GM12878 (cell line): ENCODE measurements at regions of chr15 and their contacts with region 1.

Region 1: DNA sequence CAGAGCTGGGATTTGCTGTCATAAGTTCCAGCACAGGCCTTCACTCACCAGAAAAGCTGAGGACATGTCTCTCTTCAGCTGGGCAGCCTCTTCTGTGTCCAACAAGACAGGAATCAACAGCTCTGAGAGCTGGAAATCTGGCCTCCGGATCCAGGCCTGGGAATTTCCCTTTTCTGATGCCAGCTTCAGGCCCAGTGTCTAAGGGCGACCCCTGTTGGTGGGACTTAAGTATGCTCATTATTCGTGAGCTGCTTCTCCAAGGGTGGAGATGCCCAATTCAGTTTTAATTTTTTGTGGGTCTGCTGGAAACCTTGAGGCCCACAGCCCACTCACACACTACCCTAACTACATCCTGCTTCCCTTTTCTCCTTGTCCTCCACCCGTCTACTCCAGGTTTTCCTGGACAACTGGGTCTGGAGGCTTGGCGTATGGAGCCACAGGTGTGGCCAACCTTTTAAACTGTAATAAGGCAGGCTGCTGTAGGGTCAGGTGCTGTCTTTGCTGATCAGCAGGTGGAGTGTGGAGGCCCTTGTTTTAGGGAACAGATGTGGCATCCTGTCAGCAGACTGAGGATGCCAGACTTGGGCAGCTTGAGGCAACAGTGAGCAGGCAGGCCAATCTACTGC is 2.6 kb upstream of the CEMIP start:
- DNase-seq: no peak
- ATAC-seq: peak; percentile 72
- H3K4me3 ChIP-seq: no peak overlapping the region
- H3K27ac ChIP-seq: no peak overlapping the region
- H3K4me1 ChIP-seq: no peaks in the 10 kb centered on the region
- H3K27me3 ChIP-seq: peaks cover 18 to 19% of the 10 kb centered on the region in 2 experiments
- CTCF ChIP-seq: peak; percentile 86 to 94 (median 89)
- EP300 ChIP-seq: no peak
- POLR2A ChIP-seq: no peak
- RAD21 ChIP-seq: peak; percentile 93

Region 2: DNA sequence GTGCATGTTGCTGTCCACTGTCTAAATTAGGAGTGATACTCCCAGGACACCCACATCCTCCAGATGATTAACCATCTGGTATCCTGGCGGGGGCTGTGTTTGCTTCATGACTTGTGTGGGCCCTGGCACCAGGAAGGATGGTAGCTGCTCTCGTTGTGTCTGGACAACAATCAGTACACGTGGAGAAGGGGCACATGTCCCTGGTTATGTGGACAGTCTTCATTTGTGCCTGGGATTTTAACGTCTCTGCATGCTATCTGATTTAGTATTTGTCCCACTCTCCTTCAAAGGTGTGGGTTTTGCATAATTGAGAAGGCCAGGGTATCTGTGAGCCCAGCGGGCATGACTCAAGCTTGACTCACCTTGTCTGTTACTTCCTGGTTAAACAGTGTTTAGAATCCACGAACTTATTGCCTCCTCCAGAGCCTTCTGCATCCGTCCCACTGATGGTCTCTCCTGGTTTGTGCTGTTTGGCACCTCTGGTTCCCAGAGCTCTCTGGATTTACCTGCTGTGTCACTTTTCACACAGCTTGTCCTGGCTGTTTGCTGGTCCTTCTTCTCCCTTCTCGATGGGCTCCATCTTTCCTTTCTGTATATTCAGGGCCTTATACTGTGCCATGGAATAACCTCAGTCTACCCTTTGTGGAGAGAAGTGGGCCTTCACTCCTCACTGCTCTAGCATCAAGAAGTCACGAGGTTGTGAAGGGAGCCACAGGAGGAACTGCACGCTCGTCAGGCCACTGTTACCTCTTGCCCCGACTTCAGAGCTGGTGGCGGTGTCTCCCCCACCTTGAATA is 339.8 kb before region 1 on chr15:
- CTCF ChIA-PET with region 1: no interaction called
- POLR2A ChIA-PET with region 1: no interaction called
- RAD21 ChIA-PET with region 1: no interaction called
- SMC1A ChIA-PET with region 1: no interaction called
- in situ Hi-C with region 1: no loop called
- intact Hi-C with region 1: no loop called
- DNase-seq: no peak
- ATAC-seq: no peak
- H3K4me3 ChIP-seq: no peak overlapping the region
- H3K27ac ChIP-seq: no peak overlapping the region
- H3K4me1 ChIP-seq: no peaks in the 10 kb centered on the region
- H3K27me3 ChIP-seq: peaks cover 0 to 3% of the 10 kb centered on the region in 2 experiments; a peak in 2 of 4 replicates
- CTCF ChIP-seq: no peak
- EP300 ChIP-seq: no peak
- POLR2A ChIP-seq: no peak
- RAD21 ChIP-seq: no peak

Region 3: GRCh38 chr15:80567721-80568157 is 208.8 kb before region 1 on chr15:
- CTCF ChIA-PET with region 1: interaction called, 86 read pairs
- POLR2A ChIA-PET with region 1: no interaction called
- RAD21 ChIA-PET with region 1: interaction called, 59 read pairs
- SMC1A ChIA-PET with region 1: interaction called, 40 read pairs
- in situ Hi-C with region 1: loop called (anchors 10 kb)
- intact Hi-C with region 1: loop called (anchors 1 kb)
- DNase-seq: no peak
- ATAC-seq: peak; percentile 87
- H3K4me3 ChIP-seq: no peak overlapping the region
- H3K27ac ChIP-seq: no peak overlapping the region
- H3K4me1 ChIP-seq: no peaks in the 10 kb centered on the region
- H3K27me3 ChIP-seq: peaks cover 2 to 5% of the 10 kb centered on the region in 2 experiments; a peak in 3 of 4 replicates
- CTCF ChIP-seq: peak; percentile 56 to 69 (median 59); a peak in 4 of 6 replicates
- EP300 ChIP-seq: no peak
- POLR2A ChIP-seq: no peak
- RAD21 ChIP-seq: peak; percentile 71

Region 4: DNA sequence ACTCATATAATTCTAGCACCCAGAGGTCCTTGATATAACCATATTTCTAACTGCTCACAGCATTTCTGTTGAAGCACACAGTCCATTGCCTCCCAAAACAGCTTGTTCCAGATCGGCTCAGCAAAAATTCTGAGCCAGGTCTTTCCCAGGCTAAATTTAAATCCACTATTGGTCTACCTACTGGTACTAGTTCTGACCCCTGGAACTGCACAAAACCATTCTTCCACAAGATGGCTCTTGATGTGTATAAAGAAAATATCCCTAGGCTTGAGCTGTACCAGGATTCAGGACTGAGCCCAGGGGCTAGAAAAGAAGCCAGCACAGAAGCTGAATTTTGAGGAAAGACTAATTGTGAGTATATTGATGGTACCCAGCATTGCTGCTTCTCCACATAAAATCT is 156.9 kb before region 1 on chr15:
- CTCF ChIA-PET with region 1: interaction called, 37 read pairs
- POLR2A ChIA-PET with region 1: no interaction called
- RAD21 ChIA-PET with region 1: interaction called, 19 read pairs
- SMC1A ChIA-PET with region 1: interaction called, 16 read pairs
- in situ Hi-C with region 1: no loop called
- intact Hi-C with region 1: loop called (anchors 2 kb)
- DNase-seq: no peak
- ATAC-seq: 0 out of 3 replicates have a peak, but pooled peaks have one; percentile 38
- H3K4me3 ChIP-seq: no peak overlapping the region
- H3K27ac ChIP-seq: no peak overlapping the region
- H3K4me1 ChIP-seq: no peaks in the 10 kb centered on the region
- H3K27me3 ChIP-seq: peaks cover 1 to 3% of the 10 kb centered on the region in 2 experiments; a peak in 3 of 4 replicates
- CTCF ChIP-seq: peak in 1 of 3 experiments; percentile 34; a peak in 3 of 6 replicates
- EP300 ChIP-seq: no peak
- POLR2A ChIP-seq: no peak
- RAD21 ChIP-seq: peak; percentile 33; the same call in 1 of the 2 replicates

Region 5: DNA sequence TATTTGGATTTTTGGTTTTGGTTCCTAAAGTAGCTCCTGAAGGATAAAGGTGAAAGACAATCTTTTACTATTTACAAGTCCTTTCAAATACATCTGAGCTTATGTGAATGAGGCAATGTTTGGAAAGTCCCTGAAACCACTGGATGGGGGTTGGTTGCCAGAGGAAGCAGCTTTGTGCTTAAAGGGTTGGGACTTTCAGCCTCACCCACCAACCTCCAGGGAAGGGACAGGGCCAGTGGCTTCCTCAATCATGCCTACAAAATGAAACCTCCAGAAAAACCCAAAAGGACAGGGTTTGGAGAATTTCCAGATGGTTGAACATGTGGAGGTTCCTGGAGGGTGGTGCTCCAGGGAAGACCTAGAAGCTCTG is 102.3 kb before region 1 on chr15:
- CTCF ChIA-PET with region 1: interaction called, 13 read pairs
- POLR2A ChIA-PET with region 1: no interaction called
- RAD21 ChIA-PET with region 1: interaction called, 9 read pairs
- SMC1A ChIA-PET with region 1: interaction called, 7 read pairs
- in situ Hi-C with region 1: no loop called
- intact Hi-C with region 1: no loop called
- DNase-seq: peak; percentile 55
- ATAC-seq: peak; percentile 88
- H3K4me3 ChIP-seq: no peak overlapping the region
- H3K27ac ChIP-seq: peak overlapping the region; percentile 76
- H3K4me1 ChIP-seq: peaks cover 16% of the 10 kb centered on the region; the same call in 1 of the 2 replicates
- H3K27me3 ChIP-seq: no peaks in the 10 kb centered on the region
- CTCF ChIP-seq: no peak
- EP300 ChIP-seq: peak in 1 of 2 experiments; percentile 34; a peak in 1 of 4 replicates
- POLR2A ChIP-seq: no peak
- RAD21 ChIP-seq: no peak

Region 6: DNA sequence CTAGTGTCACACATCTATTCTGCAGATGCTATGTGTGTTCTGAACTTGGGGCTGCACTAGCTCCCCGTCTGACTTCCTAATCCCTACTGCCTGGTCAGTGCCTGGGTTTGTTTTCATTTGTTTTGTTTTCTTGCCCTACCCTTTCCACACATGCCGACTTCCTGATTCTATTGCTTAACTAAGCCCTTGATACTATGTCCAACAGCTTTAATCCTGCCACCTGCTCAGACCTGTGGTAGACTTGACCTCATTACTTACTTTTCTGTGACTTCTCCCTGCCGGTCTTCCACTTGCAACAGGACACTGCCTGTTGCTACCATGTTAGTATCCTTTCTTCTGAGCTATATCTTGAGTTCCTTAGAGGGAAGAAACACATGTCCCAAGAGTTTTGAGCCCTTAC is 36.6 kb before region 1 on chr15:
- CTCF ChIA-PET with region 1: no interaction called
- POLR2A ChIA-PET with region 1: no interaction called
- RAD21 ChIA-PET with region 1: no interaction called
- SMC1A ChIA-PET with region 1: no interaction called
- in situ Hi-C with region 1: no loop called
- intact Hi-C with region 1: no loop called
- DNase-seq: no peak
- ATAC-seq: no peak
- H3K4me3 ChIP-seq: no peak overlapping the region
- H3K27ac ChIP-seq: no peak overlapping the region
- H3K4me1 ChIP-seq: no peaks in the 10 kb centered on the region
- H3K27me3 ChIP-seq: no peaks in the 10 kb centered on the region
- CTCF ChIP-seq: no peak
- EP300 ChIP-seq: no peak
- POLR2A ChIP-seq: no peak
- RAD21 ChIP-seq: no peak

Region 7: DNA sequence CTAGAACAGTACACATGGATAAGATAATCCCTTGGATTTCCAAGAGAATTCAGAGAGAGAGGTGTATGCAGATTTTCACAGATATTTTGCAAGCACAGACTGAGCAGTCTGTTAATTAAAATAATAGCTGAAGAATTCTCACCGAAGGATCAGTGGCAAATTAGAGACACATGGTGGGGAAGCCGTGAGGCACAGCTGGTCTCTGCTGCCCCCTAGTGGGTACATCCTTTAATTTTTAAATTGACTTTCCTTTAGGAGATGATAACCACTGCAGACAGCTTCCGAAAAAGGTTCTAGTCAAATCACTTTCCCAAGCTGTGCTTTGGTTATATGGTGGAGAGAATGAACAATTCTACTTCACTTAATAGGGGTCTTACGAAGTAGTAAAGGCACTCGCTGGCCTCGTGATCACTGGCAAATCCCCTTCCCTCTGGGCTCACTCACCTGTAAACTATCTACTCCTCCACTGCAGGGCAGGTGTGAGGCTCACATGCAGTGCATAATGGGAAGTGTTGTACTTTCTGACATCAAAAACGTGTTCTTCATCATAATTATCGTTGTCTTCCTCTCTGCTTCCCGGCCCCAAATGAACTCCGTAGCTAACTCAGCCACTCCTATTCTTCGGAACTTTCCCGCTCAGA is 193.6 kb after region 1 on chr15:
- CTCF ChIA-PET with region 1: interaction called, 34 read pairs
- POLR2A ChIA-PET with region 1: no interaction called
- RAD21 ChIA-PET with region 1: interaction called, 23 read pairs
- SMC1A ChIA-PET with region 1: interaction called, 8 read pairs
- in situ Hi-C with region 1: no loop called
- intact Hi-C with region 1: loop called (anchors 2 kb)
- DNase-seq: no peak
- ATAC-seq: peak; percentile 85
- H3K4me3 ChIP-seq: no peak overlapping the region
- H3K27ac ChIP-seq: no peak overlapping the region
- H3K4me1 ChIP-seq: no peaks in the 10 kb centered on the region
- H3K27me3 ChIP-seq: no peaks in the 10 kb centered on the region
- CTCF ChIP-seq: peak; percentile 62 to 87 (median 74)
- EP300 ChIP-seq: no peak
- POLR2A ChIP-seq: no peak
- RAD21 ChIP-seq: peak; percentile 82